Endothelial cell of umbilical vein (primary cell): ENCODE measurements at regions of chr10 and their contacts with region 1.

Region 1: GRCh38 chr10:100998991-100999741 is 442 bp upstream of the LZTS2 start:
- DNase-seq: peak; percentile 75
- H3K4me3 ChIP-seq: peak overlapping the region; percentile 6 to 85 (median 29)
- H3K27ac ChIP-seq: peak overlapping the region; percentile 86
- H3K4me1 ChIP-seq: peaks cover 33% of the 10 kb centered on the region
- H3K27me3 ChIP-seq: no peaks in the 10 kb centered on the region
- CTCF ChIP-seq: peak; percentile 92 to 95
- POLR2A ChIP-seq: peak; percentile 76

Region 2: DNA sequence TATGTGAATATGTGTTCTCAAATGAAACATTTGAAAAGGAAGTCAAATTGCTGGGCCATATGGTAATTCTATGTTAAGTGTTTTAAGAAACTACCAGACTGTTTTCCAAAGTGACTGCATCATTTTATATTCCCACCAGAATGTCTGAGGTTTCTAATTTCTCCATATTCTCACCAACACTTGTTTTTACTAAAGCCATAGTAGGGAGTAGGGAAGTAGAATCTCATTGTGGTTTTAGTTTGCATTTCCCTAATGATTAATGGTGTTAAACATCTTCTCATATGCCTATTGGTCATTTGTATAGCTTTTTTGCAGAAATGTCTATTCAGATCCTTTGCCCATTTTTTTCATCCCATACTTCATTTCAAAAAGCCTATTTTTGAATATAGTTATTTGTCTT is 38.9 kb before region 1 on chr10:
- CTCF ChIA-PET with region 1: no interaction called
- POLR2A ChIA-PET with region 1: no interaction called
- dilution Hi-C with region 1: no loop called
- intact Hi-C with region 1: no loop called
- DNase-seq: no peak
- H3K4me3 ChIP-seq: no peak overlapping the region
- H3K27ac ChIP-seq: no peak overlapping the region
- H3K4me1 ChIP-seq: no peaks in the 10 kb centered on the region
- H3K27me3 ChIP-seq: no peaks in the 10 kb centered on the region
- CTCF ChIP-seq: no peak
- POLR2A ChIP-seq: no peak

Region 3: GRCh38 chr10:101060036-101060950 is 61.1 kb after region 1 on chr10:
- CTCF ChIA-PET with region 1: no interaction called
- POLR2A ChIA-PET with region 1: no interaction called
- dilution Hi-C with region 1: no loop called
- intact Hi-C with region 1: loop called (anchors 2 kb)
- DNase-seq: peak; percentile 94
- H3K4me3 ChIP-seq: peak overlapping the region; percentile 89 to 97 (median 96)
- H3K27ac ChIP-seq: peak overlapping the region; percentile 99
- H3K4me1 ChIP-seq: peaks cover 36% of the 10 kb centered on the region
- H3K27me3 ChIP-seq: no peaks in the 10 kb centered on the region
- CTCF ChIP-seq: peak; percentile 89
- POLR2A ChIP-seq: peak; percentile 8